ENCODE measurements at regions of chr2 and their contacts with region 1.

Region 1: DNA sequence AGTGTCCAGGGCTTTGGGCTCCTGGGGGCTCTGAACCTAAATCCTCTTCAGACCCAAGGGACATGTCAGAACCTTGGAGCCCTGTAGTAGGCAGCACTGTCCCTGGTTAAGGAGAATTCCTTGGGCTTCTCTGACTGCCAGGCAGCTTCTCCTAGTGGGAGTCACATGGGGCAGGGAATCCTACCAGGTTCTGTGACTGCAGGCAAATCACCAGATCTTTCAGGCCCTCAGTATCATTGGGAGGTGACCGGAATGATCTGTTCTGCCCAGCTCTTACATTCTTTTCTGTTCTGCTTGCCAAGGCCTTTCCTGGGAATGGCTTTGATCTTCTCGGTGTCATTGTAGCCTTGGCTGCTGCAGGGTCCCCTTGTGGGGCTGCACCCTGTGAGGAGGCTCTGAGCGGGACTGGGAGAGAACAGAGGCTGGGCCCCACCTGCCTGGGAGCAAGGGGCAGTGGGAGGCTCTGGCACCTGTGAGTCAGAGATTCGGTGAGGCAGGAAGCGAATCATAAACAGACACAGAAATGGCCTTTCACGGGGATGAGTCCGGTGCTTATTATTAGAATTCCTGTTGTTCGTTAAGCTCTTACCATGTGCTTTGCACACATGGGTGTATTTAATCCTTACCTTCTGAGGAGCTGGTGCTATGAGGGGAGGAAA is 14.1 kb downstream of the CEP68 start:
- DNase-seq: no peak
- ATAC-seq: no peak
- H3K4me3 ChIP-seq: no peak overlapping the region
- H3K27ac ChIP-seq: peak overlapping the region in 3 of 4 donors; percentile 15 to 23 (median 15)
- H3K4me1 ChIP-seq: peaks cover 32% of the 10 kb centered on the region
- H3K27me3 ChIP-seq: no peaks in the 10 kb centered on the region
- CTCF ChIP-seq: no peak
- POLR2A ChIP-seq: no peak

Region 2: DNA sequence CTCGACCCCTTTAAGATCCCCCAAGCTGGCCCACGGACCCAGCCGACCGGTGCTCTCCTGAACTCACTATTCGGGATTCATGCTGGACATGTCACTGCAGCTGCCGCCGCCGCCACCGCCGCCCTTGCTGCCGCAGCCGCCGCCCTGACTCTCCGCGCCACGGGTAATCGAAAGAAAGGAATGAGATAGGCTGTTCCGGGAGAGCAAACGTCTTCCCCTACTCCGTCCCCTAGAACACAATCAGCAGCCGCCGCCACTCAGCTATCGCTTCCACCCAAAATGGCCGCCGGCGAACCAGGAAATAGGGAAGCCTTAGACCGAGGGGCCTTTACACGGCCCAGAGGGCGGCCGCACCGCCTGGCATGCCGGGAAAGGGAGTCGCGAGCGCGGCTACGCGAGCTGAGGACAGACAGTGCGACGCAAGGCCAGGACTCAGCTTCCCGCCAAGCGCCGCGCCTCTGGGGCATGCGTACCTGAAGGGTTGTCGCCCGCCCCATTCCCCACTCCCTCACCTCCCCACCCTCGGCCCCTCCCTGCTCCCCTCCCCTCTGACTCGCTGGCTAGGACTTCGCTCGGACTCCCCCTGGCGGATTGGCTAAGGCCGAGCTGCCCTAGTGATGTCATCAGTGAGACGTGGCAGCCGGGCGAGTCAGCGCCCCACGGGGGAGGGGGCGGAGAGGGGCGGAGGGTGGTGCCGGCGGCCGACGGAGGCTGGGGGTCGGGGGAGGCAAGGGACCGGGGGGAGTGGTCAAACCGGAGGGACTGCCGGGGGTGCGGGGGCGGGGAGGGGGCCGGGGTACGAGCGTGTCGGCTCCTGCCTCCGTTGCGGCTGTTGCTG is 59.7 kb after region 1 on chr2 and contains the start of gene RAB1A:
- intact Hi-C with region 1: loop called (anchors 10 kb)
- DNase-seq: peak; percentile 99 to 100 (median 100)
- ATAC-seq: peak; percentile 93
- H3K4me3 ChIP-seq: peak within 1 kb of the TSS; percentile 54 to 83
- H3K27ac ChIP-seq: peak within 1 kb of the TSS; percentile 99 to 100 (median 100)
- H3K4me1 ChIP-seq: peaks cover 40% of the 10 kb centered on the region
- H3K27me3 ChIP-seq: no peaks in the 10 kb centered on the region
- CTCF ChIP-seq: peak in 6 of 7 experiments; percentile 16 to 72 (median 46)
- POLR2A ChIP-seq: peak; percentile 90 to 96 (median 96)
- total RNA-seq, gene RAB1A: 43.2 to 53.7 TPM